ENCODE measurements at regions of chr6 and their contacts with region 1.

Region 1: GRCh38 chr6:33781114-33781975 is 7.6 kb downstream of the LEMD2 start:
- DNase-seq: peak; percentile 72 to 87
- H3K4me3 ChIP-seq: 0 out of 8 replicates have a peak overlapping the region, but pooled peaks of 1 of the 4 experiments have one; percentile 6
- H3K27ac ChIP-seq: peak overlapping the region; percentile 75
- H3K4me1 ChIP-seq: peaks cover 24 to 55% (median 40%) of the 10 kb centered on the region in 4 experiments
- H3K27me3 ChIP-seq: no peaks in the 10 kb centered on the region
- CTCF ChIP-seq: no peak
- EP300 ChIP-seq: peak in 1 of 2 experiments; percentile 78; a peak in 1 of 3 replicates
- POLR2A ChIP-seq: peak in 1 of 2 experiments; percentile 60; a peak in 1 of 3 replicates
- RAD21 ChIP-seq: no peak

Region 2: DNA sequence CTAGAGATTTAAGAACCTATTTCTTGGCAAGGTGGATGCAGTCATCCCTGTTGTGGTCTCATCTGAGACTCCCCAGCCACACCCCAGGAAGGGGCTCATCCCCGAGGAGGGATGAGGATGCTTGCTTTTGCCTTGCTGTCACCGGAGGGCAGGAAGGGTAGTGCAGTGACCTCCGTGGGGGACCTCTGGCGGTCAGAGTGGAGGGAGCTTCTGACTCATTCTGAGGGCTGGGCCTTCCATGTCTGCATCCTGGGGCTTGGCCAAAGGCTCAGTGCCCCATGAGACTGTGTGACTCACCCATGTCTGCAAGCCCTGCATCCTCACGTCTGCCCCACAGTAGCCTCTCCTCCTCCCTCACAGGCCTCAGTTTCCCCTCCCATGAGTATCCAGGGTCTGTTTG is 108.5 kb before region 1 on chr6:
- CTCF ChIA-PET with region 1: no interaction called
- POLR2A ChIA-PET with region 1: no interaction called
- DNase-seq: no peak
- H3K4me3 ChIP-seq: no peak overlapping the region
- H3K27ac ChIP-seq: no peak overlapping the region
- H3K4me1 ChIP-seq: peaks cover 0 to 3% (median 1%) of the 10 kb centered on the region in 4 experiments; a peak in 1 of 7 replicates
- H3K27me3 ChIP-seq: no peaks in the 10 kb centered on the region
- CTCF ChIP-seq: peak in 2 of 3 experiments; percentile 45 to 73; a peak in 3 of 4 replicates
- EP300 ChIP-seq: no peak
- POLR2A ChIP-seq: no peak
- RAD21 ChIP-seq: peak; percentile 48 to 56

Region 3: GRCh38 chr6:33794891-33795623 is 13.7 kb after region 1 on chr6:
- CTCF ChIA-PET with region 1: interaction called, 71 read pairs
- POLR2A ChIA-PET with region 1: interaction called, 21 read pairs
- DNase-seq: no peak
- H3K4me3 ChIP-seq: no peak overlapping the region
- H3K27ac ChIP-seq: no peak overlapping the region
- H3K4me1 ChIP-seq: peaks cover 8 to 39% (median 26%) of the 10 kb centered on the region in 4 experiments
- H3K27me3 ChIP-seq: no peaks in the 10 kb centered on the region
- CTCF ChIP-seq: peak in 1 of 3 experiments; percentile 1; a peak in 1 of 4 replicates
- EP300 ChIP-seq: no peak
- POLR2A ChIP-seq: no peak
- RAD21 ChIP-seq: no peak; a peak in 1 of 4 replicates

Region 4: DNA sequence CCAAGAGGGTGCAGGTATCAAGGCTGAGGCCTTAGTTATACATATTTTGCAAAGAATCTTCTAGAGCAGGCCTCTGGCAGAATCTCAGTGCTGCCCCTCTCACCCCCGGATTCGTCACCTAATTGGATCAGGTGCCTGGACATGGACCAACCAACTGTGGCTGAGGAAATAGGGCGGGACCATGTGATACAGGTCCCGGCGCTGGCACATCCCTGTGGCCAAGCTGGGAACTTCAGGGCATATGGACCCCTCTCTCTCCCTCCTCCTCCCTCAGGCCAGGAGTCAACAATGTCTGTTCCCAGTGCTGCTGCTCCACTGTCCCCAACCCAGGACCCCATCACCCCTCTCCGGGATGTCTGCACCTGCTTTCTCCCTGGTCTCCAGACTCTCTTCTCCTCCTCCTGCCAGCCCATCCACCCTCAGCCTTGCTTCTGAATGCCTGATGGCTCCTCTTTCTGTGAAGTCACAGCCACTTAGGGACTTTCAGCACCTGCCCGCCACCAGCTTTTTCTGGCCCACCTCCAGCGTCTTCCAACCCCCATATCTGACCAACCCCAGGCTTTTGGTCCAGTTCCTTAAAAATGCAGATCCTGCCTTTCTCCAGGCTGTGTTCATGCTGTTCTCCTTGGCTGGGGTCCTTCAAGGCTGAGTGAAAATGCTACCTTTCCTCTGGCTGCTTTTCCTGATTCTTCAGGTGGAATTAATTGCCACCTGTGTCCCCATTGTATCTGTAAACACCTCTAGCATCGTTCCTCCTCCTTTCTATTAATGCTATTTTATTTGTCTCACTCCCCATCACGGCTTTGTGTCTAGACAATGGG is 41.4 kb after region 1 on chr6:
- CTCF ChIA-PET with region 1: interaction called, 32 read pairs
- POLR2A ChIA-PET with region 1: interaction called, 4 read pairs
- DNase-seq: peak; percentile 41 to 72
- H3K4me3 ChIP-seq: no peak overlapping the region
- H3K27ac ChIP-seq: peak overlapping the region; percentile 10; the same call in 1 of the 2 replicates
- H3K4me1 ChIP-seq: peaks cover 0 to 11% (median 4%) of the 10 kb centered on the region in 4 experiments; a peak in 3 of 7 replicates
- H3K27me3 ChIP-seq: peaks cover 0 to 3% (median 1%) of the 10 kb centered on the region in 4 experiments; a peak in 4 of 7 replicates
- CTCF ChIP-seq: peak in 2 of 3 experiments; percentile 66 to 89; a peak in 3 of 4 replicates
- EP300 ChIP-seq: no peak
- POLR2A ChIP-seq: no peak
- RAD21 ChIP-seq: peak; percentile 41 to 60

Region 5: GRCh38 chr6:33851959-33852358 is 70.6 kb after region 1 on chr6:
- CTCF ChIA-PET with region 1: interaction called, 23 read pairs
- POLR2A ChIA-PET with region 1: interaction called, 3 read pairs
- DNase-seq: peak; percentile 66 to 71
- H3K4me3 ChIP-seq: no peak overlapping the region
- H3K27ac ChIP-seq: no peak overlapping the region
- H3K4me1 ChIP-seq: peaks cover 0 to 5% (median 2%) of the 10 kb centered on the region in 4 experiments; a peak in 4 of 7 replicates
- H3K27me3 ChIP-seq: no peaks in the 10 kb centered on the region
- CTCF ChIP-seq: peak in 2 of 3 experiments; percentile 84 to 93; a peak in 3 of 4 replicates
- EP300 ChIP-seq: no peak
- POLR2A ChIP-seq: no peak
- RAD21 ChIP-seq: peak; percentile 88 to 96